ENCODE measurements at regions of chr15 and their contacts with region 1.

Region 1: DNA sequence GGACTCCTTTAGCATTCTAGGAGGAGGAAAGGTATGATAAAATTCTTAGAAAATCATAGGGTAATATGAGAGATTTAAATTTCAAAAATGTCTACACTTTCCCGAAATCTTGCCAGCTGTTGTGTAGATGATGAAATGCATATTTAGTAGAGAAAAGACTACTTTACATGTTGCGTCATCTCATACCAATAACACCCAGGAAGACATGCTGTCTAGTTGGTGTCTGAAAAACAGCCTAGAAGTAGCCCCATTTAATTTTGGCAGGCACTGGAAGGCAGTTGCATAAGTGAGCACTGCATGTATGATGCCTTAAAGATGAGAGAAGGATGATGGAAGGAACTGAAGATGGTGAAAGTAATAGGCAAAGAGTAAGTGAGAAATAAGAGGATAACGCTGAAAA is 310.5 kb upstream of the TPM1 start:
- DNase-seq: no peak
- H3K4me3 ChIP-seq: no peak overlapping the region
- H3K4me3 Mint-ChIP-seq: no peak overlapping the region
- H3K27ac ChIP-seq: no peak overlapping the region
- H3K27ac Mint-ChIP-seq: no peak overlapping the region
- H3K4me1 ChIP-seq: no peaks in the 10 kb centered on the region
- H3K4me1 Mint-ChIP-seq: no peaks in the 10 kb centered on the region
- H3K27me3 ChIP-seq: no peaks in the 10 kb centered on the region
- H3K27me3 Mint-ChIP-seq: peaks cover 17 to 19% of the 10 kb centered on the region in 2 donors

Region 2: DNA sequence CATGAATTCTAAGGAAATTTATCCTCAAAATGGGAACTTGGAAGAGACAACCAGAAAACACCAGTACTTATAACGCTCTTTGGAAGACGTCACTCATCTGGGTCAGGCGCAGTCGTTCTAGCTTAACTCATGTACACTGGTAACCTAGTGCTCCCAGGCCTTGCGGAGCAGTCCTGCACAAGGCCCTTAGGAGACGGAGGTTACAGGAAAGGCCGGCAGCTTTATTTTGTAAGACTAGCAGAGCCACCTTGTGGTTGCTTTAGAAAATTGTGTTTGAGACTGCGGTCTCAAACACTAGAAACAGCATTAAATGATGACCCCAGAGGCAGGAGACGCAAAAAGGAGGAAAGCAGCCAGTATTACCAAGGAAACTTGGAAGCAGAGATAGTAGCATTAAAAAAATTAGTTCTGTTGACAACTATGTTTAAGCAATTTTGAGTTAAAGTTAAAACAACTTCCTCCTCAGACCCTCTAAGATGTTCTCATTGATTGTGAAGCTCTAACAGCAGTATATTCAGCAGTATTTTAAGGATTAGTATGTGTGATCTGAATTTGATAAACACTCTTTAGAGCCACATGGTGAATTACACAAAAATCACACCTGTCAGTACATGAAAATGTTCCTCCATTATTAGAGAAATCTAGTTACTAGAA is 425.1 kb before region 1 on chr15:
- CTCF ChIA-PET with region 1: no interaction called
- POLR2A ChIA-PET with region 1: no interaction called
- intact Hi-C with region 1: no loop called
- DNase-seq: no peak
- H3K4me3 ChIP-seq: no peak overlapping the region
- H3K4me3 Mint-ChIP-seq: no peak overlapping the region
- H3K27ac ChIP-seq: no peak overlapping the region
- H3K27ac Mint-ChIP-seq: no peak overlapping the region
- H3K4me1 ChIP-seq: no peaks in the 10 kb centered on the region
- H3K4me1 Mint-ChIP-seq: peaks cover 0 to 7% (median 6%) of the 10 kb centered on the region in 4 donors
- H3K27me3 ChIP-seq: peaks cover 6% of the 10 kb centered on the region
- H3K27me3 Mint-ChIP-seq: peaks cover 24 to 27% of the 10 kb centered on the region in 2 donors

Region 3: DNA sequence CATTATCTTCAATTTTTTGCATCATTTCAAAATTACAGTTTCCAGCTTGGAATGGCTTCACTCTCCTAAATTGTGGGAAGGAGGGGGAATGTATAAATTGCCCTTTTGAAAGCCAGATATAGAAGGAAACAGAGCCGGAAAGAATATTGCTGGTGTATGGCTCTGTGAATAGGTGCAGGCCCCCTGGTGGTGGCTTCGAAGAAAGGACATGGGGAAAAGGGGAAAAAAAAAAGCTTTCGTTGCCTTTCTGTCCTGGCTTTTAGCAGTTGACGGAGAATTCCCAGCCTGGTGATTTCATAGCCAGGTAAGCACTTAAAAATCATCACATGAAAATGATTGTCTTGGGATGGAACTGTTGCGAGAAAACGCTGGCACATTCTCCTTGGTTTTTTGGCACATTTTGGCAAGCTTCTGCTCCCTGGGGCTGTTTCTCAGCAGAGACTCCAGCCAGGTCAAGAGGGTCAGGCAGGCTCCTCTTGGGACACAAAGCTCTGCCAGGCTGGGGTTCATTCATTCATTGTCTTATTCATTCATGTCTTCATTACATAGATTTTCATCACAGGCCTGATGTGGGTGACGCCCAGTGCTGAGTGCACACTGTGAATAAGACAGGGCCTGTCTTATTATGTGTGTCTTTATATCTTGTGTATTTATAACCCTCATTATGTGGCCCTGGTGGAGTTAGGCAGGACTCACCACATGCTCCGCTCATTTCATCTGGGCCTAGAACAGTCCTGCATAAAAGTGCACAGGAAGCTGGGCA is 10.5 kb after region 1 on chr15:
- CTCF ChIA-PET with region 1: interaction called, 16 read pairs
- POLR2A ChIA-PET with region 1: no interaction called
- intact Hi-C with region 1: no loop called
- DNase-seq: peak in 3 of 5 donors; percentile 14 to 24 (median 23)
- H3K4me3 ChIP-seq: no peak overlapping the region
- H3K4me3 Mint-ChIP-seq: peak overlapping the region in 2 of 8 donors; percentile 3 to 30
- H3K27ac ChIP-seq: no peak overlapping the region
- H3K27ac Mint-ChIP-seq: no peak overlapping the region
- H3K4me1 ChIP-seq: peaks cover 4% of the 10 kb centered on the region
- H3K4me1 Mint-ChIP-seq: peaks cover 0 to 13% (median 5%) of the 10 kb centered on the region in 4 donors
- H3K27me3 ChIP-seq: no peaks in the 10 kb centered on the region
- H3K27me3 Mint-ChIP-seq: peaks cover 0 to 6% of the 10 kb centered on the region in 2 donors

Region 4: DNA sequence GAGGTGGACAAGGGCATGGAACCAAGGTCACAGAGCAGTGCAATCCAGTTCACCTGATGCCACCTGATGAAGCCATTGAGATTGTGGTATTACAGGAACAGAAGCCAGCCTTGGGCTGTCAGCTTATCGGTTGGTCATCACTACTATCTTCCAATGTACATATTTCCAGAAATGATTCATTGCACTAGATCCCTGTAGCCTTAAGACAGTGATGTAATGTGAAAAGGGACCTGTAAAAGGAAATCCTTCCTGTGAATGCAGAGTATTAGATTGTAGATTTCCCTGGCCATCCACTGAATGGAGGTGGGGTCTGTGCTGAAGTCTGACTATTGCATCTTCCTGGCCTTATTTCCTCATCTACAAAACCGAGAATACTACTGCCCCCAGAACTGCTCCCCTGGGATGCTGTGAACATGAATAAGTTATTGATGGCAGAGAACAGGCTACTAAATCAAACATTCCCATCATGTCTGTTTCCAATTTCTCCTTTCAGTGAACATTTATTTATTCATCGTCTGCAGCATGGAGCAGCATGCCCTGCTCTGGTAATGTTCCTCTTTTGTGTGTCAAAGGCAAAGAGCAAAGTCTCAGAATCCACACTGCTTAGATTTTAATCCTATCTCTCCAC is 263.1 kb after region 1 on chr15:
- CTCF ChIA-PET with region 1: no interaction called
- POLR2A ChIA-PET with region 1: no interaction called
- intact Hi-C with region 1: no loop called
- DNase-seq: no peak
- H3K4me3 ChIP-seq: no peak overlapping the region
- H3K4me3 Mint-ChIP-seq: no peak overlapping the region
- H3K27ac ChIP-seq: no peak overlapping the region
- H3K27ac Mint-ChIP-seq: no peak overlapping the region
- H3K4me1 ChIP-seq: no peaks in the 10 kb centered on the region
- H3K4me1 Mint-ChIP-seq: no peaks in the 10 kb centered on the region
- H3K27me3 ChIP-seq: no peaks in the 10 kb centered on the region
- H3K27me3 Mint-ChIP-seq: peaks cover 5 to 6% of the 10 kb centered on the region in 2 donors